ENCODE measurements at regions of chr9 and their contacts with region 1.

Region 1: DNA sequence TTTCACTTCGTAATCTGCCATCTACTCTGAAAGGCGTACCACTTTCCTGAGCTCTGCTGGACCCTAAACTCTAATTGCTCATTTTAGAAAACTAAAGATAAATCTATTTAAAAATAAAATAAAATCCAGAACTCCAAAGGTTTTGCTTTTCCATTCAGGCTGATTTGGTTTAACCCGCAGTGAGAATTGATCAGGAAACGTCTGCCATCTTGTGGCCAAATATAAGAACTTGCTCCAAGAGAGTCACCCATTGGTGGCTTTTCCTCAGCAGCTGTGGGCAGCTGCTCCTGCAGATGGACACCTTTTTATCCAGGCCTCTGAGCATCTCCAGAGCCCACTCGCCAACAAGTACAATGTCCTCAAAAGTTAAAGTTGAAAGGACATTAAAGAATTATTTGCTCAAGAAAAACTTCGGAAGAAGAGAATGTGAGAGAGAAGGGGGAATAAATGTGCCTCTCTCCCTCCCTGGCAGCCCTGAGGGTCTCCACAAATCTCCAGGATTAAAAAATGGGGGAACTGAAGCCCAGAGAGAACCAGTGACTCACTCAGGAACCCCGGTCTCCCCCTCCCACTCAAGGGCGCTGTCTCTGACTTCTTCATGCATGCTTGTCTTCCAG is 4.1 kb downstream of the SAXO1 start:
- DNase-seq: peak; percentile 80
- H3K4me3 ChIP-seq: no peak overlapping the region
- H3K27ac ChIP-seq: no peak overlapping the region
- H3K4me1 ChIP-seq: peaks cover 4% of the 10 kb centered on the region; the same call in 1 of the 2 replicates
- H3K27me3 ChIP-seq: no peaks in the 10 kb centered on the region

Region 2: DNA sequence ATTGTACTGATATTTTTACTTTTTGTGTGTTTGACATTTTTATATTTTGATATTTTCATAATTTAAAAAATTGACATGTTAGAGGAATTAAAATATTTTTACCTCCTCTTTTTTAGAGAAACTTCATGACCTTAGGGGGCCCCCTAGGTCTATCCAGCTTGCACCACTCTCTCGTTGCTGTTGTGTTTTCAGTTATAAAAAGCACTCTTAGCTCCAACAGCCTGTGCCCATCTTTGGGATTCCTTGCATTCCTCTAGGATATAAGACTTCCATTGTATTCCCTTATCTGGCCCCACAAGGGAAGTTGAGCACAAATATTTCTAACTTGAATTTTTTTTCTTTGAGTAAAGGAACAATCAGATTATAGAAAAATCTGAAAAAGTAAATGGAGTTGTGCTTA is 1204.8 kb before region 1 on chr9:
- in situ Hi-C with region 1: loop called (anchors 10 kb)
- DNase-seq: no peak
- H3K4me3 ChIP-seq: no peak overlapping the region
- H3K27ac ChIP-seq: no peak overlapping the region
- H3K4me1 ChIP-seq: no peaks in the 10 kb centered on the region
- H3K27me3 ChIP-seq: peaks cover 5% of the 10 kb centered on the region; the same call in 1 of the 2 replicates

Region 3: GRCh38 chr9:18678821-18679590 is 349.9 kb before region 1 on chr9:
- in situ Hi-C with region 1: loop called (anchors 10 kb)
- DNase-seq: no peak
- H3K4me3 ChIP-seq: no peak overlapping the region
- H3K27ac ChIP-seq: no peak overlapping the region
- H3K4me1 ChIP-seq: peaks cover 16% of the 10 kb centered on the region
- H3K27me3 ChIP-seq: no peaks in the 10 kb centered on the region

Region 4: GRCh38 chr9:18928711-18929110 is 100.2 kb before region 1 on chr9:
- in situ Hi-C with region 1: no loop called
- DNase-seq: peak; percentile 18
- H3K4me3 ChIP-seq: no peak overlapping the region
- H3K27ac ChIP-seq: no peak overlapping the region
- H3K4me1 ChIP-seq: no peaks in the 10 kb centered on the region
- H3K27me3 ChIP-seq: no peaks in the 10 kb centered on the region

Region 5: DNA sequence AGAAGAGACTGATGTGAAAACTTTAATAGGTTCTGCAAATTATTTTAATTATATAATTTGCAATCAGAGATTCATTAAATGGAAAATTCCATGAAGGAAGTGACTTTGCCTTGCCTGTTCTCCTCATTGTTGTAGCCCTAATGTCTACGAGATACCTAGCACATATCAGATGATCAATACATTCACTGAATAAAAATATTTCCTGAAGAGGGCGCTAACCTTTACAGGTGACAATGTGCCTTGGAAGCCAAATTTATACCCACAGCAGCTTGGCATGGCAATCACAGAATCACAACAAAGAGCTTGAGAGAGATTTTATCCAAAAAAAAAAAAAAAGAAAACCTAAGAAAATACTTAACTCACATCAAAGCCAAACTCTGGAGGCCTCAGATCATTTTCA is 56.4 kb after region 1 on chr9:
- in situ Hi-C with region 1: no loop called
- DNase-seq: peak; percentile 33
- H3K4me3 ChIP-seq: no peak overlapping the region
- H3K27ac ChIP-seq: no peak overlapping the region
- H3K4me1 ChIP-seq: no peaks in the 10 kb centered on the region
- H3K27me3 ChIP-seq: no peaks in the 10 kb centered on the region

Measured in GM23248 (cell line).